OCI-LY7 (cell line): ENCODE measurements at regions of chrX and their contacts with region 1.

Region 1: GRCh38 chrX:26783512-26784225 is 567.7 kb downstream of the MAGEB5 start:
- DNase-seq: peak; percentile 62
- H3K4me3 ChIP-seq: no peak overlapping the region
- H3K27ac ChIP-seq: no peak overlapping the region
- H3K4me1 ChIP-seq: no peaks in the 10 kb centered on the region
- CTCF ChIP-seq: peak; percentile 73

Region 2: DNA sequence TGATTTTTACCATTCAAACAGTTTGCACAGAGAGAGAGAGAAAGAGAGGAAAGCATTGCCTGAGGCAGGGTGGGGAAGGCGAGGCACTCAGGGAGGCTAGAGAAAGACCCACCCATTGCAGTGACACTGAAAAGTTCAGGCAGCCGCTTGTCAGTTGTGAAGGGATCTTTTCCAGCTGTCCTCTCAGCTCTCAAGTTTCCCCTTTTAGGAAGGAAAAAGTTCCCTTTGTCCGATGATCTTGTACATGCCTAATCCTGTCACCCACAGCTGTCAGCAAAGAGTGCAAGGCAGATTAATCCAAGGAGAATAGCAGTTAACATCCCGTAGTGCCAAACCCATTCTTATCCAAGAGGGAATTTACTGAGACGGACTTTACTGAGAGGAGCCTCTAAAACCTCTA is 312.7 kb before region 1 on chrX:
- CTCF ChIA-PET with region 1: no interaction called
- POLR2A ChIA-PET with region 1: no interaction called
- intact Hi-C with region 1: no loop called
- DNase-seq: no peak
- H3K4me3 ChIP-seq: no peak overlapping the region
- H3K27ac ChIP-seq: no peak overlapping the region
- H3K4me1 ChIP-seq: no peaks in the 10 kb centered on the region
- CTCF ChIP-seq: no peak

Region 3: GRCh38 chrX:26522501-26522900 is 261.2 kb before region 1 on chrX:
- CTCF ChIA-PET with region 1: no interaction called
- POLR2A ChIA-PET with region 1: no interaction called
- intact Hi-C with region 1: no loop called
- DNase-seq: no peak
- H3K4me3 ChIP-seq: no peak overlapping the region
- H3K27ac ChIP-seq: no peak overlapping the region
- H3K4me1 ChIP-seq: no peaks in the 10 kb centered on the region
- CTCF ChIP-seq: no peak

Region 4: DNA sequence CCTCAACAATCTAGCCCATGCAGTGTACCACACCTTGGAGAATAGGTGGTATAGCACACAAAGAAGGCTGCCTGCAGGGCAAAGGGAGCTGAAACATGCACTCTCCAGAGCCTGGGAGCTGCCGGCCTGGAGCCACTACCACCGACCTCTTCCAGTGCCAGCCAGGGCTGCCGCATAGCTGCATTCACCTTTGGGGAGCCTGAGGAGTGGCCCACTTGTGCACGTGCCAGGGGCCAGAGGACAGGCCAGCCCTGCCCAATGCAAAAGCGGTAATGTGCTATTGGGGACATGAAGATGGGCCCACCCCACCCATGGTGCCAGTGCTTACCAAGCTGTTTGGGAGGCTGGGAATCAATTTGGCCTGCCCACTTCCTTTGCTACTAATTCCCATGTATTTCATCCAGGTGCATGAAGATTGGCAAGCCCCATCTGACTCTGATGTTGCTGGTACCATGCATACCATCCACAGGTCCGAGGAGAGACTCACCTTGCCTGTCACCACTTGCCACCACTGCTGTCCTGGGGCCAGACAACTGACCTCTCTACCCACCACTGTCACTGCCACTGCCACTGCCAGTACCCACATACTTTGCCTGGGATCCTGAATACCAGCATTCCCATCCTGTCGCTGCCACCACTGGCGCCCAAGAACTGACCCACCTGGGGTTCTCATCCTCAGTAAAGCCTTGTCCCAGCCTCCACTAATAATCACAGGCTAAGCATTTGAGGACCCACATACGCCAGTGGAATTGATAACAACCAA is 60.8 kb before region 1 on chrX:
- CTCF ChIA-PET with region 1: no interaction called
- POLR2A ChIA-PET with region 1: no interaction called
- intact Hi-C with region 1: no loop called
- DNase-seq: no peak
- H3K4me3 ChIP-seq: no peak overlapping the region
- H3K27ac ChIP-seq: no peak overlapping the region
- H3K4me1 ChIP-seq: no peaks in the 10 kb centered on the region
- CTCF ChIP-seq: no peak

Region 5: GRCh38 chrX:26822448-26822847 is 38.8 kb after region 1 on chrX:
- CTCF ChIA-PET with region 1: no interaction called
- POLR2A ChIA-PET with region 1: no interaction called
- intact Hi-C with region 1: no loop called
- DNase-seq: no peak
- H3K4me3 ChIP-seq: no peak overlapping the region
- H3K27ac ChIP-seq: no peak overlapping the region
- H3K4me1 ChIP-seq: no peaks in the 10 kb centered on the region
- CTCF ChIP-seq: no peak

Region 6: DNA sequence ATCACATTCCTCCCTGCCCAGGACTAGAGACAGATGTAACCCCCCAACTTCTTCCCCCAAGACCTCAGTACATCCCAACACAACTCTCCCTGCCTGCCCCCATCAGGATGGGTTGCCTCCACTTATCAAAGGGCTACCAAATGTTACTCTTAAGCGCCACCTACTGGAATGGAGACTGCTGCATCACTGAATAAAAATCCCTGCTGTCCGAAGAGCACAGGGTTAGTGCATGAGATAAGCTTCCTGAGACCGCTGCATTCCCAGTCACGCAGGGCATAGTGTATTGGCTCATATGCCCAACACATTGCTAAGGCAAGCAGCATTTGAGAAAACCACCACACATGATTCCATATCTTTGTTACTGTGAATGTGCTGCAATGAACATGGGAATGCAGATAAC is 135.0 kb after region 1 on chrX:
- CTCF ChIA-PET with region 1: no interaction called
- POLR2A ChIA-PET with region 1: no interaction called
- intact Hi-C with region 1: loop called (anchors 10 kb)
- DNase-seq: peak; percentile 15
- H3K4me3 ChIP-seq: no peak overlapping the region
- H3K27ac ChIP-seq: no peak overlapping the region
- H3K4me1 ChIP-seq: no peaks in the 10 kb centered on the region
- CTCF ChIP-seq: peak; percentile 65

Region 7: DNA sequence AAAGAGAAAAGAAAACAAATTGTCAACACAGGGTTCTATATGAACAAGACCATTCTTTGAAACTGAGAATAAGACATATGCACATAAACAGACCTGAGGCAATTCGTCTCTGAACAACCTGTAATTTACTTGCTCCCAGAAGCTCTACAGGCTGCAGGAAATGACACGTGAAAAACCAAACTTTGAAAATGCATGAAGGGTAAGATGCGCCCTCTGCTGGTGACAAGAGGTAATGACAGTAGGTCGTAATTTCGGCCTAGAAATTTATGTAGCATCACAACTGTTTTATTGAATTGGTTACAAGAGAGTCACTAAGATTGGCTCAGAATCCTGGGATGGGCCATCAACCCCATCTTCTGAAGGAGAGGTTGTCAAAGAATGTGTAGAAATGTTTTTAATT is 403.0 kb after region 1 on chrX:
- CTCF ChIA-PET with region 1: no interaction called
- POLR2A ChIA-PET with region 1: no interaction called
- intact Hi-C with region 1: loop called (anchors 2 kb)
- DNase-seq: peak; percentile 30
- H3K4me3 ChIP-seq: no peak overlapping the region
- H3K27ac ChIP-seq: no peak overlapping the region
- H3K4me1 ChIP-seq: no peaks in the 10 kb centered on the region
- CTCF ChIP-seq: peak; percentile 79